ENCODE measurements at regions of chr1 and their contacts with region 1.

Region 1: DNA sequence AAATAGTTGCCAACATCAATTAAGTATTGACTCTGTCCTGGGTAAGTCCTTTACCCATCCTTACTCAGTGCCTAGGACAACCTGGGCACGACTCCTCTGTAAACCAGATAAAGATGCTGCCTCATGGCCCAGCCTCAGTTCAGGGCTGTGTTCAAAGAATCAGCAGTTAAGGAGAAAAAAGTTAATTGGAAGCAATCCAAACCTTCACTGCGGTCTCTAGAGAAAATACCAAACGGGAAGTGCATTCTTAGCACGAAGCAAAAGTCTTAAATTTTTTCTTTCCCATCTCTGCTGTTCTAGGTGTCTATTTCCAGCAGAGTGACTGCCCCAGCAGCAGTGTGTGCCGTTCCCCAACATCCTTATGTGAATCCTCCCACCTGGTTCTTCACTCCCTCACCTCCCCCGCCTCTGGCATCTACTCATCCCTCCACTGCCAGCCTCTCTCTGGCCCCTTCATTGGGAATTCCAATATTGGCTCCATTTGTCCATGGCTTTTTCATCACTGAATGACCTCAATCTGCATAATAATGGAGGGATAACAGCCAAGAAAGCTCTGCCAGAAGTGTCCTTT is 23.2 kb downstream of the KANK4 start:
- DNase-seq: no peak
- ATAC-seq: peak in 6 of 8 donors; percentile 12 to 66 (median 44)
- H3K4me3 ChIP-seq: peak overlapping the region in 1 of 10 donors; percentile 19
- H3K27ac ChIP-seq: no peak overlapping the region
- H3K4me1 ChIP-seq: peaks cover 4 to 47% (median 17%) of the 10 kb centered on the region in 9 donors
- H3K27me3 ChIP-seq: peaks cover 0 to 11% (median 0%) of the 10 kb centered on the region in 7 donors
- CTCF ChIP-seq: no peak

Region 2: DNA sequence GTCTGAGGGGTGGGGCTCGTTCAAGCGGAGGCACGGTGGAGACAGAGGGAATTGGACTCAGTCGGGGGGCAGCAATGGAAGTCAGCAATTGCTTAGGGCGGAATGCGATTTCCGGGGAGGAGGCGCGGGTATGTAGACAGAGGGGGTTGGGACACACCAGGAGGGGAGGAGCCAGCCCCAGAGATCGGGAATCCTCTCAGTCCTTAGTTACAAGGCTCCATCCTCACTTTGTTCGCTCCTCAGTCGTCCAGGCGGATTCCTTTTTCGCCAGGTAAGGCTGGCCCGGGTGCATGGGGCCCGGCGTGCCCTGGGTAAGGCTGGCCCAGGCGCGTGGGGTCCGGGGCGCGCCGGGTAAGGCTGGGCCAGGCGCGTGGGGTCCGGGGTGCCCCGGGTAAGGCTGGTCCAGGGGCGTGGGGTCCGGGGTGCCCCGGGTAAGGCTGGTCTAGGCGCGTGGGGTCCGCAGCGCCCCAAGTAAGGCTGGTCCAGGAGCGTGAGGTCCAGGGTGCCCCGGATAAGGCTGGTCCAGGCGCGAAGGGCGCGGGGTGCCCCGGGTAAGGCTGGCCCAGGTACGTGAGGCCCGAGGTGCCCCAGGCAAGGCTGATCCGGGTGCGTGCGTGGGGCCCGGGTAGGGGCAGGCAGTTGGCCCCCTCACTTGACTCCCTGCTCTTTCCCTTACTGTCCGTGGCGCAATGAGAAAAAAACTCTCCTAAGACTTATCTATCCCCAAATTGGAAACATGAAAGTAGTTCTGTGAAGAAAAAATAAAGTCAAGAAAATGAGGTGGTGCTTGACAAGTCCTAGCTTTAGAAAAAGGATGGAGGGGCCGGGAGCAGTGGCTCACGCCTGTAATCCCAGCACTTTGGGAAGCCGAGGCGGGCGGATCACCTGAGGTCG is 101.1 kb before region 1 on chr1 and contains the start of gene L1TD1:
- intact Hi-C with region 1: no loop called
- DNase-seq: no peak
- ATAC-seq: peak in 2 of 8 donors; percentile 41 to 47
- H3K4me3 ChIP-seq: peak within 1 kb of the TSS in 1 of 10 donors; percentile 28
- H3K27ac ChIP-seq: no peak within 1 kb of the TSS
- H3K4me1 ChIP-seq: peaks cover 0 to 20% (median 0%) of the 10 kb centered on the region in 9 donors
- H3K27me3 ChIP-seq: peaks cover 11 to 48% (median 41%) of the 10 kb centered on the region in 7 donors
- CTCF ChIP-seq: no peak
- total RNA-seq, gene L1TD1: 0.07 to 0.12 TPM in 2 of 10 donors, not detected in the others

Region 3: DNA sequence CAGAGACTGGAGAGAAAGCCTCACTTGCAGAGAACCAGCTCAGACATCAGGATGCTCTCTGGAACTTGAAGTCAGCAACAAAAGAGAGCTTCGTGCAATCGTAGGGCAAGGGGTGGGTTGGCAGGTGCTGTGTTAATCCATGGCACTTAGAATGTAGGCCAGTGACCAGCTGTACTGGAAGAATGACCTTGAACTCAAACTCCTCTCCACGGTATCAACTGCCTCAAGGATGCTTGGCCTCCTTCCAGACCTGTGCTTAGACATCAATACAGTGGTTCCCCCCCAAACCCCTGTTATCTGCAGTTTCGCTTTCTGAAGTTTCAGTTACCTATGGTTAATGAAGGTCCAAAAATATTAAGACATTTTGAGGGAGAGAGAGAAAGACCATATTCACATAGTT is 16.7 kb after region 1 on chr1:
- intact Hi-C with region 1: loop called in 1 of 10 experiments (anchors 1 kb)
- DNase-seq: no peak
- ATAC-seq: no peak
- H3K4me3 ChIP-seq: no peak overlapping the region
- H3K27ac ChIP-seq: no peak overlapping the region
- H3K4me1 ChIP-seq: peaks cover 0 to 3% (median 0%) of the 10 kb centered on the region in 9 donors
- H3K27me3 ChIP-seq: peaks cover 0 to 31% (median 11%) of the 10 kb centered on the region in 7 donors
- CTCF ChIP-seq: no peak